ENCODE measurements at regions of chr10 and their contacts with region 1.

Region 1: GRCh38 chr10:42753126-42753506 is 29.5 kb upstream of the BMS1 start:
- DNase-seq: peak; percentile 64
- H3K4me3 ChIP-seq: peak overlapping the region; percentile 44 to 56 (median 55)
- H3K27ac ChIP-seq: no peak overlapping the region
- H3K4me1 ChIP-seq: peaks cover 18% of the 10 kb centered on the region
- H3K27me3 ChIP-seq: peaks cover 18% of the 10 kb centered on the region
- CTCF ChIP-seq: peak; percentile 65 to 94

Region 2: DNA sequence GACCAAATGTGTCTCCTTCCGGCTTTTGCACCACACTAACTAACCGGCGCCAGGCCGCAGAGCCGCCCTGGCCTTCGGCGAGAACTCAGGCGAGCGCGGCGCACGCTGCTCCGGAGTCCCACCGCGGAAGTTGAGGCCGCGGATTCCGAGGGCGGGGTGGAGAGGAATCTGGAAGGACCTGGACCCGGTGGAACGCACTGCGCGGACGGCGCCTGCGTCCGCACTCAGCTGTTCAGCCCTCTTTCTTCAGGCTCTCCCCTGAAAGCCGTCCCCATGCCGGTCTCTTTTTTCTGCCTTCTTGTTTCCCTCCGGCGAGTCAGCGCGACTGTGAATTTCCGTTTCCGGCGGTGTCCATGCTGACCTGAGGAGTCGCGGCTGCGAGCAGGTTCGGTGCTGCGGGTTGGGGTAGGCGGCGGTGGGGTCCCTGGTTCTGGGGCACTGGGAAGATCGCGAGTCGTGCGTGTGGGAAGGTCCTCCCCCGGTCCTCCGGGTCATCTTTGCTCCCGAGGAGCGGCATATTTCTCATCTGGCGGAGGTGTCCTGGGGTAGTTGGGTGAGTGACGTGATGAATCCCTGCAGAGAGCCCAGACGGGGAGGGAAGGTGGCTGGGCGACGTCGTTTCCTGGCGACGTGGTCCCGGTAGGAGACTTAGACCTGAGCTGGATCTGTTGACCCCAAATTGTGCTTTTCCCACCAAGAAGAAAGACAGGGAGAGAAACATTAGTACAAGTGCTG is 29.5 kb after region 1 on chr10 and contains the start of gene BMS1:
- CTCF ChIA-PET with region 1: interaction called, 3 read pairs
- dilution Hi-C with region 1: no loop called
- in situ Hi-C with region 1: no loop called
- intact Hi-C with region 1: loop called (anchors 1 kb)
- DNase-seq: peak; percentile 94
- H3K4me3 ChIP-seq: peak within 1 kb of the TSS; percentile 55 to 84 (median 80)
- H3K27ac ChIP-seq: peak within 1 kb of the TSS; percentile 84
- H3K4me1 ChIP-seq: peaks cover 4% of the 10 kb centered on the region
- H3K27me3 ChIP-seq: no peaks in the 10 kb centered on the region
- CTCF ChIP-seq: no peak
- total RNA-seq, gene BMS1: 14.3 to 23.5 TPM

Region 3: GRCh38 chr10:42866115-42866995 is 113.2 kb after region 1 on chr10:
- CTCF ChIA-PET with region 1: interaction called, 3 read pairs
- dilution Hi-C with region 1: no loop called
- in situ Hi-C with region 1: no loop called
- intact Hi-C with region 1: loop called (anchors 2 kb)
- DNase-seq: peak; percentile 57
- H3K4me3 ChIP-seq: peak overlapping the region in 2 of 3 experiments; percentile 32 to 34
- H3K27ac ChIP-seq: no peak overlapping the region
- H3K4me1 ChIP-seq: peaks cover 10% of the 10 kb centered on the region
- H3K27me3 ChIP-seq: no peaks in the 10 kb centered on the region
- CTCF ChIP-seq: peak; percentile 43 to 78

Region 4: GRCh38 chr10:43105102-43105785 is 352.1 kb after region 1 on chr10:
- CTCF ChIA-PET with region 1: no interaction called
- dilution Hi-C with region 1: no loop called
- in situ Hi-C with region 1: no loop called
- intact Hi-C with region 1: loop called (anchors 2 kb)
- DNase-seq: peak; percentile 59
- H3K4me3 ChIP-seq: peak overlapping the region; percentile 49 to 50 (median 49)
- H3K27ac ChIP-seq: no peak overlapping the region
- H3K4me1 ChIP-seq: peaks cover 9% of the 10 kb centered on the region
- H3K27me3 ChIP-seq: no peaks in the 10 kb centered on the region
- CTCF ChIP-seq: peak; percentile 85 to 100

Measured in mammary epithelial cell (primary cell).